Right ventricle myocardium superior (tissue), 1 donor: ENCODE measurements at regions of chr1 and their contacts with region 1.

Region 1: GRCh38 chr1:21368515-21369289 is 71.2 kb upstream of the NBPF3 start:
- DNase-seq: peak; percentile 85
- ATAC-seq: peak; percentile 96

Region 2: GRCh38 chr1:21232044-21232443 is 136.7 kb before region 1 on chr1:
- intact Hi-C with region 1: loop called (anchors 2 kb)
- DNase-seq: no peak
- ATAC-seq: peak; percentile 79

Region 3: GRCh38 chr1:21255278-21255942 is 113.3 kb before region 1 on chr1:
- intact Hi-C with region 1: loop called (anchors 5 kb)
- DNase-seq: peak; percentile 94
- ATAC-seq: peak; percentile 89

Region 4: GRCh38 chr1:21573971-21574465 is 205.3 kb after region 1 on chr1:
- intact Hi-C with region 1: loop called (anchors 5 kb)
- DNase-seq: peak; percentile 92
- ATAC-seq: peak; percentile 95

Region 5: DNA sequence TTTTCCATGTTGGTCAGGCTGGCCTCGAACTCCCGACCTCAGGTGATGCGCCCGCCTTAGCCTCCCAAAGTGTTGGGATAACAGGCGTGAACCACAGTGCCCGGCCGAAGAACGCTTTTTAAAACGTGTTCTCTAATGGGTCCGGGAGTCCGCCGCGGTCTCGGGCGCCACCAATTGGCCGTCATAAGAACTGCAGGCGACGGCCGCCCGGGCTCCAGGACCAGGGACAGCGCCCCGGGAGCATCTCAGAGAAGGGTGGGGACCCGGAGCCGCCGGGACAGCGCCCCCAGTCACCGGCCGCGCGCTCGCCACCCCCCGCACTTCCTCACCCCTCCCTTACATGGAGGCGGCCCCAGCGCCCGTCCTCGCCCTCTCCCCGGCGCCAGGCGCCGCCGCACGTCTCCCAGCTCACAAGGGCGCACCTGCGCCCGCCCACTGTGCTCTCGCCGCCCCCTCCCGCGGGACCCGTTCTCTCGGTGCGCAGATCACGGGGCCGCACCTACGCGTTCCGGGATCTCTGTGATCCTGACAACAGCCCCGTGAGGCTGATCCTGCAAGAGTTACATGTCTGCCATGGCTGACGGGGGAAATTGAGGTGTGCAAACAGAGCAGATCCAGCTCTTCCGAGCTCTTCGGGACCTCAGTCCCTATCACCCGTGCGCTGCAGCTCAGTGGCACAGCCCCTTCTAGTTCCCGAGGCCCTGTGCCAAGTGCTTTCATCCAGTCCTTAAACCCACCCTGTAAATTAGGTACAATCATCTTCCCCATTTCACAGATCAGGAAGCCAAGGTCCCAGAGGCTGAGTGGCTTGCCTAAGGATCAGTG is 290.6 kb after region 1 on chr1:
- intact Hi-C with region 1: loop called (anchors 5 kb)
- DNase-seq: peak; percentile 88
- ATAC-seq: peak; percentile 81